ENCODE measurements at regions of chr9 and their contacts with region 1.

Region 1: DNA sequence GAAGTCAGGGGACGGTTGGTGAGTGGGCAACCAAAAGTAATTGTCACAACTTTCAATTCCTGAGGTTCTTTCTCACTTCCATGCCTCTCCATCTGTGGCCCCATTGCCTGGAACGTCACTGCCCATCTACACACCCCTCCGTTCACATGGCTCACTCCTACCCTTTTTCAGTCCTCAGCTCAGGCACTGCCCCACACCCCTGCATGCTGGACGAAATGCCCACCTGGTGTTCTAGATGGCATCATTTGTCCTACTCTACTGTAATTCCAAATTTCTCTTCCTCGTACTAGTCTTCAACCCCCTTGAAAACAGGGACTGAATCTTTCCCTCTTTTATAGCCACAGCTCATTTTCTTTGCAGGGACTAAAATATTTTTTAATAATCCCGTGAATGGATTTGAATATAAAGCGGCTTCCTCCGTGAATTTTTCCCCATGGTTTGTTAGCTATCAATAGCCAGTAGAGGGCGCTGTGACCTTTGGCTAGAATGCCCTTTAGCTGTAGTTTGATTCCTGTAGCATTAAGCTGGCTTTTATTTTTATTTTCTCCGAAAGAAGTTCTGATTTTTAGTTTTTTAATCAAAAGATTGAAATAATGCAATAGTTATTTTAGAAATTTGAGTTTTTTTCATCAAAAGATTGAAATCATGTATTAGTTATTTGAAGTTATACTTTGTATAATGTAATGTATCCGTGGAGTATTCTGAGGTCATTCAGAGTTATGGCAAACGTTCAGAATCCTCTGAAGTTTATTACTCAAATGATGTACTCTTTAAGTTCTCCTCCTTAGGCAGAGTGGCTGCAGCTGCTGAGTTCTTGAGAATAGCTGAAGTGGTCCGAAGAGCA is 232.1 kb downstream of the SH3GL2 start:
- DNase-seq: peak in 5 of 10 donors; percentile 41 to 78 (median 55)
- H3K4me3 ChIP-seq: peak overlapping the region in 15 of 59 donors; percentile 5 to 39 (median 20)
- H3K27ac ChIP-seq: no peak overlapping the region
- H3K27me3 ChIP-seq: peaks cover 0 to 14% (median 0%) of the 10 kb centered on the region in 45 donors
- CTCF ChIP-seq: peak; percentile 72 to 96 (median 86)

Region 2: DNA sequence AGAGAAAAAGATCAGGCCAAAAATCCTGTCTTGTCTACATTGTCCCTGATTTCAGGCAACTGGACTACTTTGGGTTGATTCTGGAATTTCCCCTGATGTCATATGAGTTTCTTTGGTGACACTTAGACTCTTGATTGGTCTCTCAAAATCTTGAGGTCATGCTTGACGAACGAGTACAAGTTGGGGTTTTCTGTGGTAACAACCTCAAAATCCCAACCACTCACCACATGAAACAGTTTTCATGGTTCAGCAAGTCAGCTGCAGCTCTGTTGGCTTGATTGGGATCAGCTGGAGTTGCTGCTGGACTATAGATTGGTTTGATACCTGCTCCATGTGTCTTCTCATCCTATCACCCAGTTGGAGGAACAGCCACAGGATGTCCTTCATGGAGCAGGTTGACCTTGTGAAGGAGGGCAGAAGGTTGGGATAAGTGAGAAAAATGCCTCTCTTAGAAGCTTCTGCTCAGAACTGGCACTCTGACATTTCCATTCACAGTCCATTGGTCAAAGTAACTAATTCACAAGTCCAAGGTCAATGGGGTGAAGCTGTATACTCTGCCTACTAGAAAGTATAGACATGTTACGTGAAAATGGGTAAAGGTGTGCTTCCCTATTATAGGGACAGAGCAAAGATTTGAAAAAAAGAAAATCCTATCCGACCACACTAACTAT is 52.4 kb after region 1 on chr9:
- intact Hi-C with region 1: no loop called
- DNase-seq: no peak
- H3K4me3 ChIP-seq: no peak overlapping the region
- H3K27ac ChIP-seq: no peak overlapping the region
- H3K27me3 ChIP-seq: peaks cover 0 to 13% (median 0%) of the 10 kb centered on the region in 45 donors
- CTCF ChIP-seq: no peak

Region 3: DNA sequence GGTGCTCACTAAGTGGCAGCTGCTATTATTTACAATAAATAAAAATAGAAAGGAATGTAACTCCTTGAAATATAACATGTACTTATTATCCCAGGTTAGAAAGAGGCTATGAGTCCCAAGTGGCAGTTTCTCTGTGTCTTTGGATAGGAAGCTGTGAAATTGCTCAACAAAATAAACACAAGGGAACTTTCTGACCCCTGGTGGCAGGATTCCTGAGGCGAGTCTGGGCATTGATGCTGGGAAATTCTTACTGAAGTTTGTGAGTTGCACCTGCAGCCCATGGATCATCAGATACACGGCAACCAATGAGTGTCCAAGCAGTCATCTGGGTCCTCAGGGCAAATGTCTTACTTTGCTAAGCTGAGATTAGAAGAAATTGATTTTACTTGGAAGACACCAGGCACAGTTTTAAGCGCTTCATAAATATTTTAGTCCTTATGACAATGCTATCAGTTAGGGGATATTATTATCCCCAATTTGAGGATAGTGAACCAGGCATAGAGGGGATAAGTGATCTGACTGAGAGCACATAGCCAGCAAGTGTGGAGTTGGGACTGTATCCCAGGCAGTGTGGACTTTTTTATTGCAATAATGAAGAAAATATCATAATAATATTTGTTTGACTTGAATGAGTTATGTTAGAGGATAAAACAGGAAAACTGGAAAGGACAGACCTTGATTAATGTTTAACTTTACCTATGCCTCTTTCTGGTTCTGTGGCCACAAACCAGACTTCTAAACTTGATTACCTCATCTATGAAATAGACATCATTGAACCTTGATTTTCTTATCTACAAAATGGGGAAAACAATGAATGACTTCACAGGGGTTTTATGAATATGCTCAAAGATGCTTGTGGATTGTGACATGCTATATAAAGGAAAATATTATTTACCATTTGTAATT is 397.5 kb after region 1 on chr9:
- intact Hi-C with region 1: loop called in 1 of 2 experiments (anchors 5 kb)
- DNase-seq: peak in 1 of 10 donors; percentile 13
- H3K4me3 ChIP-seq: no peak overlapping the region
- H3K27ac ChIP-seq: no peak overlapping the region
- H3K27me3 ChIP-seq: peaks cover 0 to 18% (median 0%) of the 10 kb centered on the region in 45 donors
- CTCF ChIP-seq: peak in 47 of 56 donors; percentile 13 to 53 (median 32)

Region 4: DNA sequence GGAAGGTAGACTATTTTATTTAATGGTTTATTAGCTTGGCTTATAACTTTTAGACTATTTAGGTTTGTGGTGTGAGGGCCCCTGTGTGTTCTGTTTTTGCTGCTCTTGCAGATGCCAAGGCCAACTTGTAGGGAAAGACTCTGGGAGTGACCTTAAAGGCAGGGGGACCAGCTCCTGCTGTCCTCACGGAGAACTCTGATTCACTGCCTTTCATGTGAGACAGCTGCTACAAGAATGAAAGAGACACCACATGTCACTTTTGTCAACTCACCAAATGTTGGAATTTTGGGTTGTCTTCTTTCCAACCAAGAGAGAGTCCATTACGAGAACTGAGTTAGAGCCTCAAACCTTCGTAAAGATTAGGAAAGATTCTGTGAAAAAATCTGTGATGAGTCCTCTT is 404.7 kb after region 1 on chr9:
- intact Hi-C with region 1: loop called in 1 of 2 experiments (anchors 5 kb)
- DNase-seq: peak in 1 of 10 donors; percentile 10
- H3K4me3 ChIP-seq: no peak overlapping the region
- H3K27ac ChIP-seq: no peak overlapping the region
- H3K27me3 ChIP-seq: no peaks in the 10 kb centered on the region
- CTCF ChIP-seq: no peak

Region 5: GRCh38 chr9:19028835-19029451 is 1218.0 kb after region 1 on chr9:
- intact Hi-C with region 1: loop called in 1 of 2 experiments (anchors 5 kb)
- DNase-seq: peak in 2 of 10 donors; percentile 31 to 39
- H3K4me3 ChIP-seq: peak overlapping the region in 5 of 59 donors; percentile 4 to 52 (median 15)
- H3K27ac ChIP-seq: no peak overlapping the region
- H3K27me3 ChIP-seq: peaks cover 0 to 9% (median 0%) of the 10 kb centered on the region in 45 donors
- CTCF ChIP-seq: peak; percentile 71 to 93 (median 85)

Region 6: GRCh38 chr9:19456996-19457692 is 1646.2 kb after region 1 on chr9:
- intact Hi-C with region 1: loop called in 1 of 2 experiments (anchors 10 kb)
- DNase-seq: peak in 8 of 10 donors; percentile 46 to 78 (median 69)
- H3K4me3 ChIP-seq: peak overlapping the region in 57 of 59 donors; percentile 8 to 72 (median 44)
- H3K27ac ChIP-seq: peak overlapping the region in 24 of 59 donors; percentile 1 to 78 (median 22)
- H3K27me3 ChIP-seq: no peaks in the 10 kb centered on the region
- CTCF ChIP-seq: peak in 55 of 56 donors; percentile 64 to 99 (median 95)